ENCODE measurements at regions of chr6 and their contacts with region 1.

Region 1: DNA sequence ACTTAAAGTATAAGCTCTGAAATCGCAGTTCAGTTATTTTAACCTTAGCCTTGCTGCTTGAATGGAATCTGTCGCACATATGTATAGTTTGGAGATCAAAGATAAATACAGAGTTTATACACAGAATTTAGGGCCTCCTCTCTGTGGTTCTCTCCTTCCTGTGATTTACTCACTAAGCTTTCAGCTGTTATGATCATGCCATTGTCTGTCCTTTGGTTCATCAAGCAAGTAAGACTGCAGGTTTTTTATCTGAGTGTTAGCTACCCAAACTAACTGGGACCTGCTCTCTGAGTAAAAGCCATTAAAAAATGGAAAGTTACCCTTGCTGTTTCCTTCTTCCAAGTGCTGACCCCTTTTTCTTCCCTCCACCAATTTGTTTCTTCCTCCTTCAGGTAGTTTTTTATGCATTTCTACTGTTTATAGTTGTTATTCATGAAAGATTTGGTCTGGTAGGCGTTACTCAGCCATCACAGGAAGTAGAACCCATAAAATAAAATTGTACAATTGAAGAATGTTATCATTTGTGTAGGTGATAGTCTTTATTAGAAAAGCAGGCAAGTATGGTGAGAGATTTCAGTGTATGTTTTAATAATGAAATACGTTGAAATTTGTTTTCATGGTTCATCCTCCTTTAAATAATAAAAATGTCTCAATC is 33.7 kb upstream of the SUMO4 start:
- DNase-seq: no peak
- H3K4me3 Mint-ChIP-seq: no peak overlapping the region
- H3K27ac Mint-ChIP-seq: no peak overlapping the region
- H3K4me1 Mint-ChIP-seq: peaks cover 49% of the 10 kb centered on the region
- H3K27me3 Mint-ChIP-seq: no peaks in the 10 kb centered on the region

Region 2: DNA sequence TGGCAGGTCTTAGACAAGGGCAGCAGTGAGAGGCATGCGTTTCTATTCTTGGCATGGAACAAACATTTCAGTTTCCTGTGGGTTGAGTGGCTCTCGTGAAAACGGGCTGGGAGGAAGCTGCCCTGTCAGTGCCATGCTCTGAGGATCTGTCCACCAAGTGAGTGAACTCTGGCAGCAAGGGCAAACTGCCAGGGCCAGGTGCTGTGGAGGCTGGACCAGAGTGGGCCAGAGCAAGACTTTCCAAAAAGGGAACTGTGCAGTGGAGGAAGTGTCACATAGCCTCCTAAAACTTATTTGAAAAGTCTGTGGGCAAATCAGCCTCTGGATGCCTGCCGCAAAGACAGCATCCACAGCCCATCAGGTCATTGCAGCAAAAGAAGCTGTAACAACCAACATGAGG is 93.1 kb before region 1 on chr6:
- CTCF ChIA-PET with region 1: no interaction called
- intact Hi-C with region 1: no loop called
- DNase-seq: peak; percentile 13
- H3K4me3 Mint-ChIP-seq: no peak overlapping the region
- H3K27ac Mint-ChIP-seq: no peak overlapping the region
- H3K4me1 Mint-ChIP-seq: peaks cover 37% of the 10 kb centered on the region
- H3K27me3 Mint-ChIP-seq: no peaks in the 10 kb centered on the region

Region 3: DNA sequence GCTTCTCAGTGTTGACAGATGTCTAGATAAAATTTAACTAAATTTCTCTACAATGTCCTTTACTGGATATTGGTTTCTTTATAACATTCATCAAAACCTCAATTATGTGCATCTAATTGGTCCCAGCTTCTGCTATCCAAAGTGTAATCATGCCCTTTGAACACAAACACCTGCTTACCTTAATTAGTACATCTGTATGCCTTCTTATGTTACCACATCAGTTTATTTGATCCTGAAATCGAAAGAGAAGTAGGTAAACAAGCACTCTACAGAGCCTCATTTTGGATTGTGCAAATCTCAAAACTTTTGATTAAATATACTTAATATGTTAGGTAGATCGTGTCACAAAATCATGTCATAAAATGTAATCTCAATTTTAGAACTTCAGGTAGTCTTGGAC is 12.4 kb before region 1 on chr6:
- CTCF ChIA-PET with region 1: interaction called, 3 read pairs
- intact Hi-C with region 1: loop called (anchors 1 kb)
- DNase-seq: no peak
- H3K4me3 Mint-ChIP-seq: no peak overlapping the region
- H3K27ac Mint-ChIP-seq: no peak overlapping the region
- H3K4me1 Mint-ChIP-seq: peaks cover 74% of the 10 kb centered on the region
- H3K27me3 Mint-ChIP-seq: no peaks in the 10 kb centered on the region

Region 4: DNA sequence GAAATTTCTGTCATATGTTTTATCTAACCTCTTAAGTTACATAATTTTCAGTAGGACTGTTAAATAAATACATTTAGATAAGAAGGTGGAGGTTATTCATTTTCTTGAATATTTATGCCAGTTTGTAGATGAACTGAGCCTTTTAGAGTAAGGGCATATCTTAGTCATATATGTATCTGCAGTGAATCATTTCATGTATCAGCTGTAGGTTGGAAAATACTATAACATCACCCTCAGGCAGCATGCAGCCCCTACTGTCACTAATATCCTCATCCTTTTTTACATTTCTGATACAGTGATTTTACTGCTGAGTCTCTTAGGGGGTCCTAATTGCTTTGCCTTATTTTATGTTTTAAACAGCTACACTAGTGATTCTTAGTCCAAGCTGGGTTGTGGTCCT is 14.1 kb after region 1 on chr6:
- CTCF ChIA-PET with region 1: no interaction called
- intact Hi-C with region 1: loop called (anchors 2 kb)
- DNase-seq: peak; percentile 35
- H3K4me3 Mint-ChIP-seq: no peak overlapping the region
- H3K27ac Mint-ChIP-seq: no peak overlapping the region
- H3K4me1 Mint-ChIP-seq: peaks cover 63% of the 10 kb centered on the region
- H3K27me3 Mint-ChIP-seq: no peaks in the 10 kb centered on the region

Measured in activated naive CD4-positive, alpha-beta T cell treated with anti-CD3 and anti-CD28 coated beads for 36 hours (primary cell).